Caco-2 (cell line): ENCODE measurements at regions of chr14 and their contacts with region 1.

Region 1: DNA sequence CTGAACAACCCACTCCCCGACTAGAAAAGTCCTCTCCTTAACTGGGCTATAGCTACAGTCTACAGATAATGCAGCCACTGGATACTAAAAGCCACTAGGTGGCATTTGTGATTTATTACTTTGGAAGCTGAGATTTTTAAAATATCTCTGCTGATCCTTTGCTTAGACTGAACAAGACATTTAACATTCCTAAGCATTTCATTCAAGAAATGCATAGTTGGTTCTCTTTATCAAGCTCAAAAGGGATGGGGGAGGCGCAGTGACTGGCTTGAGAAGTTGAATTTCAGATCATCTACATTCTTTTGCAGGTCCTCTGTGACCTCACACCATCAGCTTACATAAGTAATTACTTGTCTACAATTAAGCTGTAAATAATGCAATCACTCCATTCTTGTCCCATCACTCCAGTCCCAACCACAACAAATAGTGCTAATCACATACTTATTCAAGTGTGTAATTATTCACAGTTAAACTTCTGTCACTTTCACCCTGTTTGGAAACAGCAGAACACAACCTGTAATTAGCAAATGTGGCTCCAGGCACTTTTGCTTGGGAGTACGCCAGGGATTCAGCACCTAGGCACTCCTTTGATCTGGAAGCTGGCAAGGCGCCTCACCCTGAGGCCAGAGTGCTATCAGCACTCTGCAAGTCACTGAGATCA is 203.6 kb downstream of the NOVA1 start:
- DNase-seq: peak; percentile 15 to 56
- H3K4me3 ChIP-seq: no peak overlapping the region
- H3K4me3 Mint-ChIP-seq: no peak overlapping the region
- H3K27ac Mint-ChIP-seq: no peak overlapping the region
- H3K4me1 ChIP-seq: 0 out of 2 replicates have a peak, but pooled peaks cover 6% of the 10 kb centered on the region
- H3K4me1 Mint-ChIP-seq: peaks cover 12% of the 10 kb centered on the region
- H3K27me3 ChIP-seq: no peaks in the 10 kb centered on the region
- H3K27me3 Mint-ChIP-seq: no peaks in the 10 kb centered on the region
- CTCF ChIP-seq: peak; percentile 26 to 29

Region 2: DNA sequence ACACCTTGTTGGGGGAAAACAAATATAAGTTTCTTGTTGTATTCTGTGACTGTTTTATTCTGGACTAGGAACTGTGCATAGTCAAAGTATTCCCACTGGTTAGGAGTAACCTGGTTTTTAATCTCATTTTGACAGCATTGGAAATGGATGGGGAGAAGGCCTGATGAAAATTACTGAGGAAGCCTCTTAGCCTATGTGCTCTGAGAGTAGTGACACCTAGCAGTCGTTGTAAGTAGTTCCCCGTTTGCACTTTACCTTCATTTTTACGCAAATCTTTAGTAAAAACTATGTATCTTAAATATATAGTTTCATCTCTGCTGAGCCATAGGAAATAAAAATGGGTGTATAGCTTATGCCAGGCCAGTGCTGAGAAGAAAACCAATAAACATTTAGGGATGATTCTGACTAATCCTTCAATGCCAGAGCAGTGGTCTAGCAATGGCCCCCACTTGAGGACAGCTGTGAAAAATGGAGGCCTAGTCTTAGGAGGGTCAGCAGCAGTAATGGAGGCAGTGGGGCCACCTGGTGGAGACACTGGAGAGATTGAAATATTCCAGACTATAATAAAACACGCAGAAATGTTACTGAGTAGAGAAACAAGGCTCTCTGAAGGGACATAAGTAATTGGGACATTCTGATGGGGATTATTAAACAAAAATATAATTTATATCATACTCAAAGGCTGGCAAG is 336.8 kb after region 1 on chr14:
- CTCF ChIA-PET with region 1: interaction called, 3 read pairs
- POLR2A ChIA-PET with region 1: no interaction called
- intact Hi-C with region 1: loop called (anchors 1 kb)
- DNase-seq: peak; percentile 36 to 41
- H3K4me3 ChIP-seq: no peak overlapping the region
- H3K4me3 Mint-ChIP-seq: no peak overlapping the region
- H3K27ac Mint-ChIP-seq: no peak overlapping the region
- H3K4me1 ChIP-seq: no peaks in the 10 kb centered on the region
- H3K4me1 Mint-ChIP-seq: no peaks in the 10 kb centered on the region
- H3K27me3 ChIP-seq: no peaks in the 10 kb centered on the region
- H3K27me3 Mint-ChIP-seq: no peaks in the 10 kb centered on the region
- CTCF ChIP-seq: peak; percentile 38 to 52

Region 3: DNA sequence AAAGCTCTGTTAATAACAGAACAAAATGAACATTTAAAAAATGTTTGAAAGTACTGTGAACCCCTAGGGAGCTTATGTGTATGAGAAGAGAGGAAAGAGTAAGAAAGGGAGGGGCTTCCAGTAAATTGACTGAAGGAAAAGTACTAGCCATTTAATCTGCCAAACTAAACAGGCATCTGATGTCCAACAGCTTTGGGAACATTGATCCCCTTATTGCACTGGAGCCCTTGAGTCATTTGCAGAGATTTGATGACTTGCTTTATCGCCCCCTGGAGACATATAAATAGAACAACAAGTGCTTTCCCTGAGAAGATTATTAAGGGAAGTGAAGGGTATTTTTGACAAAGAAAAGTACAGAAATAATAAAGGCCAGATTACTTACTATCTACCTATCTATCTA is 522.8 kb after region 1 on chr14:
- CTCF ChIA-PET with region 1: interaction called, 3 read pairs
- POLR2A ChIA-PET with region 1: no interaction called
- intact Hi-C with region 1: loop called (anchors 10 kb)
- DNase-seq: peak in 1 of 2 experiments; percentile 5
- H3K4me3 ChIP-seq: no peak overlapping the region
- H3K4me3 Mint-ChIP-seq: no peak overlapping the region
- H3K27ac Mint-ChIP-seq: no peak overlapping the region
- H3K4me1 ChIP-seq: no peaks in the 10 kb centered on the region
- H3K4me1 Mint-ChIP-seq: no peaks in the 10 kb centered on the region
- H3K27me3 ChIP-seq: no peaks in the 10 kb centered on the region
- H3K27me3 Mint-ChIP-seq: no peaks in the 10 kb centered on the region
- CTCF ChIP-seq: peak in 1 of 2 experiments; percentile 35

Region 4: GRCh38 chr14:26984311-26985177 is 590.3 kb after region 1 on chr14:
- CTCF ChIA-PET with region 1: no interaction called
- POLR2A ChIA-PET with region 1: no interaction called
- intact Hi-C with region 1: loop called (anchors 5 kb)
- DNase-seq: peak; percentile 42 to 53
- H3K4me3 ChIP-seq: no peak overlapping the region
- H3K4me3 Mint-ChIP-seq: no peak overlapping the region
- H3K27ac Mint-ChIP-seq: no peak overlapping the region
- H3K4me1 ChIP-seq: no peaks in the 10 kb centered on the region
- H3K4me1 Mint-ChIP-seq: no peaks in the 10 kb centered on the region
- H3K27me3 ChIP-seq: no peaks in the 10 kb centered on the region
- H3K27me3 Mint-ChIP-seq: peaks cover 2% of the 10 kb centered on the region
- CTCF ChIP-seq: peak; percentile 47 to 73